Heart left ventricle (tissue), 16 donors: ENCODE measurements at regions of chr6 and their contacts with region 1.

Region 1: GRCh38 chr6:26457806-26458688 is at the start of gene BTN2A1:
- DNase-seq: peak; percentile 82 to 88 (median 85)
- ATAC-seq: peak; percentile 99
- H3K4me3 ChIP-seq: peak within 1 kb of the TSS; percentile 59 to 91 (median 88)
- H3K27ac ChIP-seq: peak within 1 kb of the TSS; percentile 84 to 98 (median 94)
- H3K4me1 ChIP-seq: peaks cover 0 to 69% (median 37%) of the 10 kb centered on the region in 12 donors
- H3K27me3 ChIP-seq: no peaks in the 10 kb centered on the region
- CTCF ChIP-seq: no peak
- POLR2A ChIP-seq: peak in 1 of 2 donors; percentile 23
- total RNA-seq, gene BTN2A1: 9.2 to 26.2 (median 14.8) TPM

Region 2: GRCh38 chr6:26366504-26366903 is 91.5 kb before region 1 on chr6:
- intact Hi-C with region 1: loop called in 1 of 10 experiments (anchors 5 kb)
- DNase-seq: no peak
- ATAC-seq: no peak
- H3K4me3 ChIP-seq: peak overlapping the region in 7 of 12 donors; percentile 42 to 84 (median 74)
- H3K27ac ChIP-seq: peak overlapping the region in 1 of 12 donors; percentile 96
- H3K4me1 ChIP-seq: peaks cover 0 to 41% (median 15%) of the 10 kb centered on the region in 12 donors
- H3K27me3 ChIP-seq: no peaks in the 10 kb centered on the region
- CTCF ChIP-seq: no peak
- POLR2A ChIP-seq: no peak

Region 3: GRCh38 chr6:26401987-26402658 is 55.9 kb before region 1 on chr6 and contains the start of gene BTN3A1:
- intact Hi-C with region 1: loop called in 2 of 10 experiments (anchors 5 to 10 kb)
- DNase-seq: peak; percentile 54 to 72 (median 66)
- ATAC-seq: peak; percentile 89 to 96 (median 94)
- H3K4me3 ChIP-seq: peak within 1 kb of the TSS; percentile 22 to 78 (median 60)
- H3K27ac ChIP-seq: peak within 1 kb of the TSS; percentile 24 to 93 (median 81)
- H3K4me1 ChIP-seq: peaks cover 0 to 46% (median 11%) of the 10 kb centered on the region in 12 donors
- H3K27me3 ChIP-seq: no peaks in the 10 kb centered on the region
- CTCF ChIP-seq: no peak
- POLR2A ChIP-seq: no peak
- total RNA-seq, gene BTN3A1: 3.1 to 47.6 (median 9.1) TPM

Region 4: GRCh38 chr6:26421259-26422144 is 36.5 kb before region 1 on chr6:
- intact Hi-C with region 1: loop called in 1 of 10 experiments (anchors 5 kb)
- DNase-seq: peak; percentile 66 to 81 (median 71)
- ATAC-seq: peak; percentile 98 to 100 (median 98)
- H3K4me3 ChIP-seq: peak overlapping the region; percentile 55 to 99 (median 78)
- H3K27ac ChIP-seq: peak overlapping the region; percentile 62 to 93 (median 87)
- H3K4me1 ChIP-seq: peaks cover 0 to 35% (median 14%) of the 10 kb centered on the region in 12 donors
- H3K27me3 ChIP-seq: no peaks in the 10 kb centered on the region
- CTCF ChIP-seq: no peak
- POLR2A ChIP-seq: peak in 1 of 2 donors; percentile 50

Region 5: DNA sequence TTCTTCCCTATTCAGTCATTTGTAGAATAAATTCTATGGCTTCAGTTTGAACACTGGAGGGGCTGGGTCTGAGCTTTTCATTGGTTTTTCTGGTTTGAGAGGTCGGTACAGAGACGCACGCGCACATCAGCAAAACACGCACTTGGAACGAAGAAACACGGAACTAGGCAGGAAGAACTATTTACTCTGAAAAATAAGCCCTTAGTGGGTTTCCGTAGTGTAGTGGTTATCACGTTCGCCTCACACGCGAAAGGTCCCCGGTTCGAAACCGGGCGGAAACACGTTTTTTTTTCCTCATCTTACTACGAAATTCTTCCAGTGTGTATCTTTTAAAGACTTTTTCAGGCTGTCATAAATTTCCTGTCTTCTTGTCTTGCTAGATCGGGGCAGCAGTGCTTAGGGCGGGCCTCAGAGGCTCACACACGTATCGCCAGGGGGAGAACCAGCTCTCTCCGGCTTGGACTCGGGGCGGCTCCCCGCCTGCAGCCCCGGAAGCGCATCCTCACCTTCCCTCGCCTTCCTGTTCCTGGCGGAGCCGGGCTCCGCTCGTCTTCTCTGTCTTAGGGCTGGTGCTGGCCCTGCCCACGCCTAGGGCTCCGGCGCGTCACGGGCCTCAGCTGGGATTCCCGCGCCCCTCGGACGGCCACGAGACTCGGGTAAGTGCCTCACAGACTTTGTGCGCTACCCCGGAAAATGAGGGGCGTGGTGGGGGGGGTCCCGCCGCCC is 80.0 kb after region 1 on chr6 and contains the start of gene HMGN4:
- intact Hi-C with region 1: no loop called
- DNase-seq: peak; percentile 82 to 91 (median 87)
- ATAC-seq: peak; percentile 86 to 90 (median 90)
- H3K4me3 ChIP-seq: peak within 1 kb of the TSS; percentile 58 to 94 (median 76)
- H3K27ac ChIP-seq: peak within 1 kb of the TSS; percentile 75 to 96 (median 92)
- H3K4me1 ChIP-seq: peaks cover 0 to 48% (median 25%) of the 10 kb centered on the region in 12 donors
- H3K27me3 ChIP-seq: no peaks in the 10 kb centered on the region
- CTCF ChIP-seq: peak in 3 of 12 donors; percentile 19 to 40 (median 30)
- POLR2A ChIP-seq: peak in 1 of 2 donors; percentile 56
- total RNA-seq, gene HMGN4: 22.4 to 34.7 (median 32.1) TPM